ENCODE measurements at regions of chr6 and their contacts with region 1.

Region 1: GRCh38 chr6:148999929-149000468 is 253.2 kb downstream of the UST start:
- DNase-seq: peak; percentile 88
- H3K4me3 ChIP-seq: no peak overlapping the region
- H3K27ac ChIP-seq: peak overlapping the region; percentile 53
- H3K27me3 ChIP-seq: no peaks in the 10 kb centered on the region
- CTCF ChIP-seq: no peak

Region 2: DNA sequence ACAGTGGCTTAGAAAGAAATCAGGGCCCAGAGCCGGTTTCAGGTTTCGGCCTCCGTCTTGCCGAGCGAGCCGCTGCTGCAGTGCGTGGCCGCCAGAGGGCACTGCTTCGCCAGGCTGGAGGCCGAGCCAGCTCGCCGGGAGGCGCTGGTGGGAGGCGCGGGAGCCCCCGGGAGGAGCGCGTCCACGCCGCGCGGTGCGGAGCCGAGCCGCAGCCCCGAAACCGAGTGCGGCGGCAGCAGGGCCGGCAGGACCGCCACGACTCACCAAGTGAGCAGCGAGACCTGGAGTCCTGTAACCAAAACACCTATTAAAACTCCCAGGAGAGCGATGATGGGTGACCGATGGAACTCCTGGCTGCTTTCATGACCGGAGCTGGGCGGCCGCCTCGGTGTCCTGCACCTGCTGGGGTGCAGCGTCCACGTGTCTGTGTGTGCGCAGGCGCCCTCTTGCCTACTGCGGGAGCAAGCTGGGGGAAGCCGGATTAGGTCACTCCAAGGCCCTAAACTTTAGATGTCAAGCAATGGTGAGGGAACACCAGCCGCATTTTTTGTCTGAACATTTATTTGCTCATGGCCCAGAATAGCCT is 440.1 kb before region 1 on chr6:
- in situ Hi-C with region 1: loop called (anchors 25 kb)
- DNase-seq: peak; percentile 44
- H3K4me3 ChIP-seq: peak overlapping the region; percentile 51
- H3K27ac ChIP-seq: no peak overlapping the region
- H3K27me3 ChIP-seq: no peaks in the 10 kb centered on the region
- CTCF ChIP-seq: peak; percentile 86

Region 3: GRCh38 chr6:148869585-148869984 is 130.4 kb before region 1 on chr6:
- in situ Hi-C with region 1: no loop called
- DNase-seq: peak; percentile 81
- H3K4me3 ChIP-seq: no peak overlapping the region
- H3K27ac ChIP-seq: peak overlapping the region; percentile 22
- H3K27me3 ChIP-seq: no peaks in the 10 kb centered on the region
- CTCF ChIP-seq: no peak

Measured in brain microvascular endothelial cell (primary cell).